Pancreas (tissue), 10 donors: ENCODE measurements at regions of chr2 and their contacts with region 1.

Region 1: DNA sequence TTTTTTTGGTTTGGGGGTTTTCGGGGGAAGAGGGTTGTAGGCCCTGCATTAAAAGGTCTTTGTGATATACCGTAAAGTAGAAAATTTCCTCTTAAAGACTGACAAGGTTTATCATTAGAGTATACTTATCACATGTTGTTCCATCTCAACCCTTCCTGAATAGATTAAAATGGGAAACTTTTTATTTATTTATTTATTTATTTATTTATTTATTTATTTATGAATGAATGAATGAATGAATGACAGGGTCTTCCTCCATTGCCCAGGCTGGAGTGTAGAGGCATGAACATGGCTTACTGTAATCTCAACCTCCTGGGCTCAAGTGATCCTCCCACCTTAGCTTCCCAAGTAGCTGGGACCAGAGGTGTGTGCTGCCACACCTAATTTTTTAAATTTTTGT is 48.5 kb upstream of the SLC3A1 start:
- DNase-seq: no peak
- ATAC-seq: no peak
- H3K4me3 ChIP-seq: no peak overlapping the region
- H3K27ac ChIP-seq: no peak overlapping the region
- H3K4me1 ChIP-seq: no peaks in the 10 kb centered on the region
- H3K27me3 ChIP-seq: no peaks in the 10 kb centered on the region
- CTCF ChIP-seq: no peak

Region 2: GRCh38 chr2:44170311-44170717 is 56.4 kb before region 1 on chr2:
- intact Hi-C with region 1: loop called in 1 of 3 experiments (anchors 10 kb)
- DNase-seq: no peak
- ATAC-seq: no peak
- H3K4me3 ChIP-seq: peak overlapping the region in 3 of 4 donors; percentile 75 to 96 (median 94)
- H3K27ac ChIP-seq: peak overlapping the region in 2 of 4 donors; percentile 93 to 96
- H3K4me1 ChIP-seq: peaks cover 0 to 27% (median 13%) of the 10 kb centered on the region in 3 donors
- H3K27me3 ChIP-seq: no peaks in the 10 kb centered on the region
- CTCF ChIP-seq: no peak

Region 3: GRCh38 chr2:44686561-44686960 is 459.8 kb after region 1 on chr2:
- intact Hi-C with region 1: no loop called
- DNase-seq: no peak
- ATAC-seq: no peak
- H3K4me3 ChIP-seq: no peak overlapping the region
- H3K27ac ChIP-seq: no peak overlapping the region
- H3K4me1 ChIP-seq: no peaks in the 10 kb centered on the region
- H3K27me3 ChIP-seq: no peaks in the 10 kb centered on the region
- CTCF ChIP-seq: no peak